ENCODE measurements at regions of chr17 and their contacts with region 1.

Region 1: DNA sequence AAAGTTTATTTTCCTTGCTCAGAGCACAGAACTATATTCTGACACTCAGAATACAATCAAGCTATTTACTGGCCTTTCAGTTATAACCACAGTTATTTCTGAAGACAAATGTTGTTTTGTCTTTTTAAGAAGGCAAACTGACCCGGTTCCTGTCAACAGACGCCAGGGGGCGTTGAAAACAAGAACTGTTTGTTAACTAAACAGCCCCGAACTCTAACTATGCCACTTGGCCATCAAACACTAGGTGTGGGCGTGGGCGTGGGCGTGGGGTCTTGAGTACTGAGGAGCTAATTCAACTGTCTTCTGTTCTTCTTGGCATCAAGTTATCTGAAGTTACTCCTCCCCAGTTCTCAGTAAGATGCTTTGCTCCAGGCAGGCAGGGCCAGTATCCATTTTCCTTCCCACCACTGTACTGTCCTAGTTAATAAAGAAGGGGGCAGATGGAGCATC is 63.2 kb upstream of the MTMR4 start:
- DNase-seq: no peak
- ATAC-seq: peak; percentile 50

Region 2: DNA sequence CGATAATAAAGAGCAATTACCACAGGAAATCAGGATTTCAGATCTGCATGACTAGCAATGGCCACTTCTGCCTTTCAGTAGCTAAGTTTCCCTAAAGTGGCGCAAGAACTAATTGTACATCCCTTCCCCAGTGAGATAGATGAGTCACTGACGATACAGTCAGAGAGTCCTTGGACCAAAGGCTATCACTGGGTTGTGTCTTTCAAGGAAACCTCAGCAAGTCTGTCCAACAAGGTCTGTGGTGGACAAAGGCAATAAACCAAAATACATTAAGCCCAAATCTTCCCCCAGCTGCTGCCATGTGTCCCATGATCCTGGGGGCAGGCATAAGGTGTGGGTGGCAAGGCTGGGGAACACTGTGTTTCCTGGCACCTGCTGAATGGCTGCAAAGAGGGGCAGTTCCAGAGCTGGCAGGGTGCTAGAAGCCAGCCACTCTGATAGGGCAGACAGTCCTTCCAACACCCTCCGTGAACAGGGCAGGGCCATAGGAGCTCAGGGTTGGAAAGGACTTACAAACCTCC is 42.7 kb before region 1 on chr17:
- intact Hi-C with region 1: loop called (anchors 5 kb)
- DNase-seq: no peak
- ATAC-seq: peak; percentile 67

Measured in Right ventricle myocardium inferior (tissue), 1 donor.